ENCODE measurements at regions of chr10 and their contacts with region 1.

Region 1: GRCh38 chr10:96831867-96832720 is at the start of gene LCOR:
- DNase-seq: peak; percentile 85
- H3K4me3 Mint-ChIP-seq: peak within 1 kb of the TSS; percentile 99
- H3K27ac Mint-ChIP-seq: peak within 1 kb of the TSS; percentile 94
- H3K4me1 Mint-ChIP-seq: peaks cover 30% of the 10 kb centered on the region
- H3K27me3 Mint-ChIP-seq: no peaks in the 10 kb centered on the region
- CTCF ChIP-seq: no peak
- total RNA-seq, gene LCOR: 33.9 and 40.4 TPM in 2 replicates

Region 2: DNA sequence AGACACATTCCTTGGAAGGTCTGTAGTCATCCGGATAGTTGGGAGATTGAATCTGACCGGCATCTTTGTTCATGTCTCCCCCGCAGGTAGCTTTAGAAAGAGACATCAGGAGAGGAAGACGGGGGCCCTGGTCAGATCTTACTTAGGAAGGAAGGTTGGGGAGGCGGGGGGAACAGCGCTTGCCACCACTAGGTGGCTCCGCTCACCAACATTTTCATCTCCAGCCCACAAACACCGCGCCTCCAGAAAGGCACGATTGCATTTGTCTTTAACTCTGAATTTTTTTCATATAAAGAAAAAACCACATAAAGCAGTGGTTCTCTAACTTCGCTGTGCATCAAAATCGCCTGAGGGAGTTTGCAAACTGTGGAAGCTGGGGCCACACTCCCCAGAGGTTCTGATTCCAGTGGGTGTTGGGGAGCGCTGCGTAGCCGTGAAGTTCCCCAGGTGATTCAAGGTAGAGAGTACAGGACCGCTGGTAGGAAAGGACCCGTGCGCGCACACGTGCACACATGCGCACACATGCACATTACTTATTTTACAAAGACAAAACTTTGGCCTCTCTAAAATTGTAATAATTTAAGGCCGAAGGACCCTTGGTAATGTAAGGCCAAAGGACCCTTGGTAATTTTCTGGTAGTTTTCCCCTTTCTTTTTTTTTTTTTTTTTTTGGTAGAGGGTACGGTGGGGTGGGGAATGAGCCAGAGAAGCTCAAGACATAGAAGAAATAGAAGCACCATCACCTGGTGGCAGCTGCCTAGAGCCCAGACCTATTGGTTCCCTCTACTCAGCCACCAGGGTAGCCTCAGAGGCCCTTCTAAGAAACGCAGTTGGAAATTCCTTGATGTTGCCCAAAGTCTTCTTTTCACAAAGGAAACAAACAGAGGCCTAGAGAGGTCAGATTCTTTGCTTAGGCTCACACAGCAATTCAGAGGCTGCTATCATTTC is 435.9 kb before region 1 on chr10:
- CTCF ChIA-PET with region 1: interaction called, 5 read pairs
- POLR2A ChIA-PET with region 1: no interaction called
- intact Hi-C with region 1: loop called (anchors 1 kb)
- DNase-seq: peak; percentile 65
- H3K4me3 Mint-ChIP-seq: no peak overlapping the region
- H3K27ac Mint-ChIP-seq: no peak overlapping the region
- H3K4me1 Mint-ChIP-seq: no peaks in the 10 kb centered on the region
- H3K27me3 Mint-ChIP-seq: peaks cover 71% of the 10 kb centered on the region
- CTCF ChIP-seq: peak; percentile 76

Region 3: DNA sequence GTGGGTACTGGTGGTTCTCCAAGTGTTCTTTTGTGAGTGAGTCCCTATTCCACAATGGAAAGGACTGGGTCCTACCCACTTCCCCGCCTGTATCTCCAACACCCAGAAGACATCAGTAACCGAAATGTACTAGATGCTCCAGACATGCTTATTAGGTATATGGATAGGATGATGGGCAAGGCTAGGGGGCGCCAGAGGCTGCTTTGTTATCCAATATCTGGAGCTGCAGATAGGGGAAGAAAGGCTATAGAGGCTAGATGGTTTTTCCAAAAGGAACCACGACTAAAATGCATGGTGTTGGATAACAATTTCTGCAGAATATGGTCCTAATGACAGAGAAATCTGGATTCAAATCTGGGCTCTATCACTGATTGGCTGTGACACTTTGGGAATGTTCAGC is 189.1 kb before region 1 on chr10:
- CTCF ChIA-PET with region 1: interaction called, 5 read pairs
- POLR2A ChIA-PET with region 1: no interaction called
- intact Hi-C with region 1: loop called (anchors 1 kb)
- DNase-seq: peak; percentile 59
- H3K4me3 Mint-ChIP-seq: no peak overlapping the region
- H3K27ac Mint-ChIP-seq: no peak overlapping the region
- H3K4me1 Mint-ChIP-seq: peaks cover 6% of the 10 kb centered on the region
- H3K27me3 Mint-ChIP-seq: no peaks in the 10 kb centered on the region
- CTCF ChIP-seq: no peak

Region 4: DNA sequence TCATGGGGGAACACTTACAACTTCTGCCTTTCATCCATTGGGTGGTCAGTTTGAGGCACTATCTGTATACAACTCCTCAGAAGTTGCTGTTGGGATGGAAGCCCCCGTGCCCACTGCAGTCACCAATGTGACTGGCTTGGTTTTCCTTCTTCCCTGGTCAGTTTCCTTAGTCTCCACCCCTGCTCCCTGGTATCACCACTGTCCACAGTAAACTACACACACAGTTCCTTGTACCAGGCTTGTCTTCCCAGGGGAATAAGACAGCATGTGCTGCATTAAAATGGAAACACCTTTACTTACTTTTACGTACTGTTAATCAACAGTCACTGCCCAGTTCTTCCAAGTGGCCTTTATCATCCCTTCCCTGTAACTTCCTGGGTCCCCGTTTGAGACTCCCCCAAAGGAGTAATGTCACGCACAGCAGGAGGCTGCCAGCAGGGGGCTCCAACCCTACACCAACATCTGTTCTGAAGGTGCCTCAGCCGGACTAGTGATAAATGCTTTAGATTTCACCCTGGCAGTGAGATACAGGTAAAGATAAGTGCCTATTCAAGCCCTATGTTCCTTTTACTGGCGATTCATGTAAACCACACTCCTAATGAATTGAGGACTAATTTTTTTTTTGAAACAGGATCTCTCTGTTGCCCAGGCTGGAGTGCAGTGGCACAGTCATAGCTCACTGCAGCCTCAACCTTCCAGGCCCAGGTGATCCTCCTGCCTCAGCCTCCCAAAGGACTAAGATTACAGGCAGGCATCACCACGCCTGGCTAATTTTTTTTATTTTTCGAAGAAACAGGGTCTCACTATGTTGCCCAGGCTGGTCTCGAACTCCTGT is 66.5 kb before region 1 on chr10:
- CTCF ChIA-PET with region 1: interaction called, 6 read pairs
- POLR2A ChIA-PET with region 1: no interaction called
- intact Hi-C with region 1: loop called (anchors 1 kb)
- DNase-seq: peak; percentile 69
- H3K4me3 Mint-ChIP-seq: no peak overlapping the region
- H3K27ac Mint-ChIP-seq: no peak overlapping the region
- H3K4me1 Mint-ChIP-seq: no peaks in the 10 kb centered on the region
- H3K27me3 Mint-ChIP-seq: no peaks in the 10 kb centered on the region
- CTCF ChIP-seq: peak; percentile 85

Region 5: GRCh38 chr10:96789571-96790108 is 42.5 kb before region 1 on chr10:
- CTCF ChIA-PET with region 1: interaction called, 17 read pairs
- POLR2A ChIA-PET with region 1: no interaction called
- intact Hi-C with region 1: loop called (anchors 1 kb)
- DNase-seq: peak; percentile 56
- H3K4me3 Mint-ChIP-seq: no peak overlapping the region
- H3K27ac Mint-ChIP-seq: no peak overlapping the region
- H3K4me1 Mint-ChIP-seq: peaks cover 1% of the 10 kb centered on the region
- H3K27me3 Mint-ChIP-seq: peaks cover 23% of the 10 kb centered on the region
- CTCF ChIP-seq: peak; percentile 52

Region 6: DNA sequence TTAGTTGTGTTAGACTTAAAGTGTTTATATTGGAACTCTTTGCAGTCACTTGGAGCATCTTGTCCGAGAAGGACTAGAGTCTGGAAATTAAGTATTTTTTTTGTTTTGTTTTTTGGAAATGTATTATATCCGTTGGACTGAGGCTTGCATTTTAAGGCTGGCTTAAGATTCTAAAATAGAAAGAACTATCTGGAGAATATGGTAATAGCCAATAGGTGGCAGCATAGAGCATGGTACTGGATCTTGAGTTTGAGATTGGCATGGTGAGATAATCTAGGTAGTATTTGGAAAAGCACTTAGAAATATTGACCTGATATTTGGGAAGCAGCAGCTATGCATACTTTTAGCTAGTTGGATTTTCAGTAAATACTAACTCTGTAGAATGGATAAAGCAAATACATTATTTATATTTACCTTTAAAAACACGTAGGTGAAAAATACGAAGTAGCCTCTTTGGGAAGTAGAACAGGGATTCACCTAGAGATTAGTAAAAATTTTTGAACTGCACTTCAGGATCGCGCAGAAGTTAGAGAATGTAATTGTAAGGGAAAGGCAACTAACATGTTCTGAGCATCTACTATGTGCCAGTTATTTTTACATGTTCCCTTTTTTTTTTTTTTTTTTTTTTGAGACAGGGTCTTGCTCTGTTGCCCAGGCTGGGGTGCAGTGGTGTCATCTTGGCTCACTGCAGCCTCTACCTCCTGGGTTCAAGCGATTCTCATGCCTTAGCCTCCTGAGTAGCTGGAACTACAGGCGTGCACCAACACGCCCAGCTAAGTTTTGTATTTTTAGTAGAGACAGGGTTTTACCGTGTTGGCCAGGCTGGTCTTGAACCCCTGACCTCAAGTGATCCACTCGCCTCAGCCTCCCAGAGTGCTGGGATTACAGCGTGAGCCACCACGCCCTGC is 78.6 kb after region 1 on chr10:
- CTCF ChIA-PET with region 1: interaction called, 4 read pairs
- POLR2A ChIA-PET with region 1: no interaction called
- intact Hi-C with region 1: loop called (anchors 2 kb)
- DNase-seq: peak; percentile 62
- H3K4me3 Mint-ChIP-seq: no peak overlapping the region
- H3K27ac Mint-ChIP-seq: no peak overlapping the region
- H3K4me1 Mint-ChIP-seq: peaks cover 12% of the 10 kb centered on the region
- H3K27me3 Mint-ChIP-seq: no peaks in the 10 kb centered on the region
- CTCF ChIP-seq: peak; percentile 56

Region 7: GRCh38 chr10:97025613-97026242 is 193.6 kb after region 1 on chr10:
- CTCF ChIA-PET with region 1: interaction called, 3 read pairs
- POLR2A ChIA-PET with region 1: no interaction called
- intact Hi-C with region 1: loop called (anchors 1 kb)
- DNase-seq: peak; percentile 76
- H3K4me3 Mint-ChIP-seq: no peak overlapping the region
- H3K27ac Mint-ChIP-seq: no peak overlapping the region
- H3K4me1 Mint-ChIP-seq: peaks cover 10% of the 10 kb centered on the region
- H3K27me3 Mint-ChIP-seq: peaks cover 15% of the 10 kb centered on the region
- CTCF ChIP-seq: peak; percentile 64

Region 8: GRCh38 chr10:97042081-97042480 is 210.0 kb after region 1 on chr10:
- CTCF ChIA-PET with region 1: no interaction called
- POLR2A ChIA-PET with region 1: no interaction called
- intact Hi-C with region 1: no loop called
- DNase-seq: no peak
- H3K4me3 Mint-ChIP-seq: no peak overlapping the region
- H3K27ac Mint-ChIP-seq: no peak overlapping the region
- H3K4me1 Mint-ChIP-seq: peaks cover 14% of the 10 kb centered on the region
- H3K27me3 Mint-ChIP-seq: no peaks in the 10 kb centered on the region
- CTCF ChIP-seq: no peak

Measured in MCF 10A (cell line).